ENCODE measurements at regions of chr15 and their contacts with region 1.

Region 1: GRCh38 chr15:57306161-57306943 is 70.0 kb upstream of the CGNL1 start:
- DNase-seq: peak; percentile 95
- ATAC-seq: peak; percentile 95

Region 2: DNA sequence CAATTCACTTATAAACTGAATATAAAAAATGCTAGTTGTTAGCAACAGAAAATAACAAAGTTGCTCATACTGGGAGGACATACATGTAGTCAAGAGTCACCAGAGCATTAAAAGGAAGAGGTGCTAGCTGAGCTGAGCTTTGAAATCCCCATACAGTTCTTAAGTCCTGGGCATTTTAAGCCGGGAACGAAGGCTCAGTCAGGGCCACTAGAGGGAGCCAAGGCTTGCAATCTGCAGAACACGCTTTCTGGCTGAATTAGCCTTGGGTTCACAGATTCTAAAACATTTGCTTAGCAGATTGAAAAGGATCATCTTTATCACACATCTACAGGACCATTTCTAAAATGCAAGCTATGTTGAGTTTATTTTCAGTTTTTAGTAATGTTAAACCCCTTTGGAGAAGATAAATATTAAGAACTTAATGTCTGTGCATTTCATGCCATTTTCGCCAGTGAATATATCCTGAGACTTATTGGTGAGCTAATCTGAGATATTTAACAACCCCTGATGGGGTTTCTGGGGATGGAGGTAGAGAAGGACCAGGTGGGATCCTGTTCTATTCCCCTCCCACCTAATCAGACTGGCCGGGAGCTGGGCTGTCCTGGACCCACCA is 815.1 kb before region 1 on chr15:
- intact Hi-C with region 1: loop called (anchors 10 kb)
- DNase-seq: peak; percentile 66
- ATAC-seq: peak; percentile 71

Region 3: GRCh38 chr15:56821721-56822425 is 484.5 kb before region 1 on chr15:
- intact Hi-C with region 1: loop called (anchors 5 kb)
- DNase-seq: no peak
- ATAC-seq: peak; percentile 86